IMR-90 (cell line): ENCODE measurements at regions of chr7 and their contacts with region 1.

Region 1: DNA sequence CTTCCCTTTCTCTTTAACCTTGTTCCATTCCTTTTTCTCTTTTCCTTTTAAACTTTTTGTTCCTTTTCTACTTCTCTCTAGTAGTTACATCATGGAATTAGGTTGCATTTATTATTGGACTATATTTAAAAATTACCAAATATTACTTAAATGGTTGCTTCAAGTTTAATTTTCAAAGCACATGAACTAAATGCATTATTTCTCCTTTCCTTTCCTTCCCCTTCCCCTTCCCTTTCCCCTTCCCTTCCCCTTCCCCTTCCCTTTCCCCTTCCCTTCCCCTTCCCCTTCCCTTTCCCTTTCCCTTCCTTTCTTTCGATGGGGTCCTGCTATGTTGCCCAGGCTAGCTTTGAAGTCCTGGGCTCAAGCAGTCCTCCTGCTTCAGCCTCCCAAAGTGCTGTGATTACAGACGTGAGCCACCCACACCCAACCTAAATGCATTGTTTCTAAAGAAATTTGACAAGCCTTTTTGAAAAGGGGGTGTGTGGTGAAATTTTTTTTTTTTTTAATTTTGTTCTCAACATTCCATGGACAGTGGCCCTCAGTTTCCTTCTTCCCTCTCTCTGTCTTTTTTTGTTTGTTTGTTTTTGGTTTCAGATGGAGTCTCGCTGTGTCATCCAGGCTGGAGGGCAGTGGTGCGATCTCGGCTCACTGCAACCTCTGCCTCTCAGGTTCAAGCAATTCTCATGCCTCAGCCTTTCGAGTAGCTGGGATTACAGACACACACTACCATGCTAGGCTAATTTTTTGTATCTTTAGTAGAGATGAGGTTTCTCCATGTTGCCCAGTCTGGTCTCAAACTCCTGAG is 31.2 kb downstream of the TMEM60 start:
- DNase-seq: no peak
- ATAC-seq: no peak
- H3K4me3 ChIP-seq: no peak overlapping the region
- H3K27ac ChIP-seq: no peak overlapping the region
- H3K4me1 ChIP-seq: peaks cover 2% of the 10 kb centered on the region
- H3K27me3 ChIP-seq: no peaks in the 10 kb centered on the region
- CTCF ChIP-seq: no peak
- POLR2A ChIP-seq: no peak
- RAD21 ChIP-seq: no peak

Region 2: GRCh38 chr7:77627309-77627676 is 139.7 kb before region 1 on chr7:
- CTCF ChIA-PET with region 1: no interaction called
- POLR2A ChIA-PET with region 1: interaction called, 11 read pairs
- dilution Hi-C with region 1: no loop called
- in situ Hi-C with region 1: no loop called
- intact Hi-C with region 1: no loop called
- DNase-seq: peak; percentile 31
- ATAC-seq: no peak
- H3K4me3 ChIP-seq: no peak overlapping the region
- H3K27ac ChIP-seq: no peak overlapping the region
- H3K4me1 ChIP-seq: peaks cover 3% of the 10 kb centered on the region; the same call in 1 of the 2 replicates
- H3K27me3 ChIP-seq: no peaks in the 10 kb centered on the region
- CTCF ChIP-seq: no peak
- POLR2A ChIP-seq: no peak
- RAD21 ChIP-seq: no peak